ENCODE measurements at regions of chr16 and their contacts with region 1.

Region 1: GRCh38 chr16:30429678-30430427 is at the start of gene DCTPP1:
- DNase-seq: peak; percentile 97
- ATAC-seq: peak; percentile 96
- H3K4me3 Mint-ChIP-seq: no peak within 1 kb of the TSS
- H3K27ac Mint-ChIP-seq: no peak within 1 kb of the TSS
- H3K4me1 Mint-ChIP-seq: peaks cover 31% of the 10 kb centered on the region
- H3K27me3 Mint-ChIP-seq: no peaks in the 10 kb centered on the region
- total RNA-seq, gene DCTPP1: 89.3 to 102 TPM

Region 2: DNA sequence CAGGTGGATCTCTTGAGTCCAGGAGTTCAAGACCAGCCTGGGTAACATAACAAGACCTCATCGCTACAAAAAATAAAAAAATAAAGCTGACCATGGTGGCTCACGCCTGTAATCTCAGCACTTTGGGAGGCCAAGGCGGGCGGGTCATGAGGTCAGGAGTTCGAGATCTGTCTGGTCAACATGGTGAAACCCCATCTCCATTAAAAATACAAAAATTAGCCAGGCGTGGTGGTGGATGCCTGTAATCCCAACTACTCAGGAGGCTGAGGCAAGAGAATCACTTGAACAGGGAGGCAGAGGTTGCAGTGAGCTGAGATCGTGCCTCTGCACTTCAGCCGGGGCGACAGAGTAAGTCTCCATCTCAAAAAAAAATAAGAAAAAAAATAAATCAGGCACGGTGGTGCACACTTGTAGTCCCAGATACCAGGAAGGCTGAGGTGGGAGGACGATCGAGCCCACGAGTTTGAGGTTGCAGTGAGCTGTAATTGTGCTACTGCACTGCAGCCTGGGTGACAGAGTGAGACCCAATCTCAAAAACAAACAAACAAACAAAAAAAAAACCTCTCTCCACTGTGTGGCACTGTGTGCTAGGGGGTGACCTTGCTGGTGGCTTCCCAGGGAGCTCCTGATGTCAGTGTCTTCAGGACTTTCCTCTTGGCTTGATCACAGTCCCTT is 287.0 kb before region 1 on chr16:
- CTCF ChIA-PET with region 1: no interaction called
- POLR2A ChIA-PET with region 1: no interaction called
- intact Hi-C with region 1: no loop called
- DNase-seq: peak; percentile 33
- ATAC-seq: peak; percentile 82
- H3K4me3 Mint-ChIP-seq: no peak overlapping the region
- H3K27ac Mint-ChIP-seq: peak overlapping the region; percentile 2
- H3K4me1 Mint-ChIP-seq: peaks cover 20% of the 10 kb centered on the region
- H3K27me3 Mint-ChIP-seq: no peaks in the 10 kb centered on the region

Region 3: GRCh38 chr16:30417529-30418349 is 12.1 kb before region 1 on chr16:
- CTCF ChIA-PET with region 1: interaction called, 56 read pairs
- POLR2A ChIA-PET with region 1: interaction called, 14 read pairs
- intact Hi-C with region 1: no loop called
- DNase-seq: peak; percentile 94
- ATAC-seq: peak; percentile 92
- H3K4me3 Mint-ChIP-seq: peak overlapping the region; percentile 49
- H3K27ac Mint-ChIP-seq: no peak overlapping the region
- H3K4me1 Mint-ChIP-seq: peaks cover 31% of the 10 kb centered on the region
- H3K27me3 Mint-ChIP-seq: no peaks in the 10 kb centered on the region

Region 4: DNA sequence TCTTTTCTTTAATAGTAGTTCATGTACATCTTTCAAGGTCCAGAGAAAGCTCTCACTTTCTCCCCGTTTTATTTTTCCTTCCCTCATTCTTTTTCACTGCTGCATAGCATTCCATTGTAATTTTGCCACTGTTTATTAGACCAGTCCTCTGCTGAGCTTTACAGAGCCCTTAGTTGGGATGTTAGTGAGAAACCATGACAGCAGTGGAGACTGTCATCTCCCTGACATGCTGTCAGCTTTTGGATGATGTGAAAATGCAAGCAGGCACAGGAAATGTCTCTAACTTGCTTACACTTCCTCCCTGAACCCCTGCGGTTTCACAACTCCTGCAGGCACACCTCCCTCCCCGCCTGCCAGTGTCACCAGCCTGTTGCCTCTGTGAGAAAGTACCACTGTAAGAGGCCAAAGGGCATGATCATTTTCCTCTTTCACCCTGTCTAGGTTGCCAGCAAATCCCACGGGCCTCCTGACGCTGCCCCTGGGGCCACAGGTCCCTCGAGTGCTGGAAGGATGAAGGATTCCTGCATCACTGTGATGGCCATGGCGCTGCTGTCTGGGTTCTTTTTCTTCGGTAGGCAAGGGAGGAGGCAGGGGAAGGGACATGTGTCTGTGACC is 42.6 kb after region 1 on chr16 and contains the start of gene ITGAL:
- CTCF ChIA-PET with region 1: interaction called, 36 read pairs
- POLR2A ChIA-PET with region 1: interaction called, 16 read pairs
- intact Hi-C with region 1: loop called (anchors 1 kb)
- DNase-seq: peak; percentile 93
- ATAC-seq: peak; percentile 62
- H3K4me3 Mint-ChIP-seq: peak within 1 kb of the TSS; percentile 95
- H3K27ac Mint-ChIP-seq: peak within 1 kb of the TSS; percentile 99
- H3K4me1 Mint-ChIP-seq: peaks cover 63% of the 10 kb centered on the region
- H3K27me3 Mint-ChIP-seq: no peaks in the 10 kb centered on the region
- total RNA-seq, gene ITGAL: 210 to 222 TPM

Region 5: GRCh38 chr16:30534368-30535105 is 104.7 kb after region 1 on chr16 and contains the start of gene ZNF747:
- CTCF ChIA-PET with region 1: interaction called, 30 read pairs
- POLR2A ChIA-PET with region 1: interaction called, 5 read pairs
- intact Hi-C with region 1: loop called (anchors 1 to 2 kb)
- DNase-seq: peak; percentile 95
- ATAC-seq: peak; percentile 80
- H3K4me3 Mint-ChIP-seq: peak within 1 kb of the TSS; percentile 91
- H3K27ac Mint-ChIP-seq: peak within 1 kb of the TSS; percentile 100
- H3K4me1 Mint-ChIP-seq: peaks cover 44% of the 10 kb centered on the region
- H3K27me3 Mint-ChIP-seq: no peaks in the 10 kb centered on the region
- total RNA-seq, gene ZNF747: 6.3 to 8.0 TPM

Region 6: DNA sequence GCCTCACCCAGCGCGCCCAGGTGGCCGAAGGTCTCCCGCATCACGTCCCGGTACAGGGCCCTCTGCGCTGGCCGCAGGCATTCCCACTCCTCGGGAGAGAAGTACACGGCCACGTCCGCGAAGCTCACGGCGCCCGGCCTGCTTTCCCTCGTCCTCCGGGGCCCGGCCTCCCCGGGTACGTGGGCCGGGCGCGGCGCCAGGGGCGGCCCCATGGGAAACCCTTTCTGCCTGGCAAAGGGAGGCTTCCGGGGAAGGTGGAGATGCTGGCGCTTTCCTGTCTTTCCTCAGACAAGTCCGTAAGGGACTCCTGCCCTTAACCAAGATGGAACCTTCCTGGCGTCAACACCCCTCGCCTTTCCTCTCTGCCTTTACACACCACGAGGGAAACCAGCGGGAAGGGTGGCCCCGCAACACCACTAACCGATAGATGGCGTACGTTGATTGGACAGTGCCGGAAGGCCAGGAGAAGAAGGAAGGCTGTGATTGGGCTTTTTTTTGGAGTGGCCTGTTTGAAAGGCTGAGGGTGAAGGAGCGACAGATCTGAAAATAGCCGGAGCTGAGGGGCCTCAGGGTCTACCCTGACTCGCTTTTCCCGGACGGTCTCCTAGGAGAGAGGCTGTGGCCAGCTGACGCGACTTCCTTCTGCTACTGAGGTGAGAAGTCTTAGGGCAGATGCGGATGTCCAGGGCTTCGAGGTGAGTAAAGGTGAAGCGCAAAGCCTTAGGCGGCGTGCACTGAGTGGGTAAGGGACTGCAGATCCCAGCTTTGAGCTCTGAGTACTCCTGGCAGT is 155.7 kb after region 1 on chr16 and contains the start of gene ZNF785:
- CTCF ChIA-PET with region 1: interaction called, 4 read pairs
- POLR2A ChIA-PET with region 1: no interaction called
- intact Hi-C with region 1: loop called in 1 of 2 experiments (anchors 1 kb)
- DNase-seq: peak; percentile 96
- ATAC-seq: peak; percentile 99
- H3K4me3 Mint-ChIP-seq: peak within 1 kb of the TSS; percentile 87
- H3K27ac Mint-ChIP-seq: peak within 1 kb of the TSS; percentile 92
- H3K4me1 Mint-ChIP-seq: peaks cover 37% of the 10 kb centered on the region
- H3K27me3 Mint-ChIP-seq: no peaks in the 10 kb centered on the region
- total RNA-seq, gene ZNF785: 9.2 to 10.8 TPM

Region 7: DNA sequence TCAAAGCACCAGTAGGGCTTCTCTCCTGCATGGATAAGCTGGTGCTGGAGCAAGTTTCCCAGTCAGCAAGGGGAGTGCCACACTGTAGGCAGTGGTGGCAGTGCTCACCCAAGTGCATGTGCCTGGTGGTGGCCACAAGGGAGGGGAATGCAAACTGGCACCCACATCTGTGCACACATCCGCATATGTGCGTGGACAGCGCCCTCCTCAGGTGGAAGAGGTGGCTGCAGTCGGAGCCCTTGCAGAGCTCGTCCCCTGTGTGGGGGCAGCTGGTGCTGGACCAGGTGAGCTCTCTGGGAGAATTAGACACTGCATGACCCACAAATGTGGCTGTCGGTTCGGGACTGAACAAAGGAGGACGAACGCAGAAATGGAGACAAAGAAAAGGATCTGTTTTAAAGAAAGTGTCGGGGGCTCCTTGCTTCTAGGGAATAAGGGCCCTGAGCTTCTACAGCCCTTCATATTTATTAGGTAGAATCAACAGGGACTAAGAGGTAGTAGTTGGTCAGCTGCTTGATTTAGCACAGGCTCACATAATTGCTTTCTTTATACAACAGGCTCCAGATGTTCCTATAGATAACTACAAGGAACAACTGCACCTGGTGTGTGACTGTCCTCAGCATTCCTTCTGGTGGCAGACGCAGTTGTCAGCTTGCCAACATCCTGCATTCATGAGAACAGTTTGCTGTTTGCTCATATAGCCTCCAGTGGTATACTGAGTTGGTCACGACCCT is 185.7 kb after region 1 on chr16:
- CTCF ChIA-PET with region 1: interaction called, 27 read pairs
- POLR2A ChIA-PET with region 1: interaction called, 4 read pairs
- intact Hi-C with region 1: loop called (anchors 1 to 5 kb)
- DNase-seq: peak; percentile 94
- ATAC-seq: peak; percentile 89
- H3K4me3 Mint-ChIP-seq: no peak overlapping the region
- H3K27ac Mint-ChIP-seq: no peak overlapping the region
- H3K4me1 Mint-ChIP-seq: peaks cover 4% of the 10 kb centered on the region
- H3K27me3 Mint-ChIP-seq: no peaks in the 10 kb centered on the region

Region 8: GRCh38 chr16:31072540-31073141 is 642.8 kb after region 1 on chr16:
- CTCF ChIA-PET with region 1: no interaction called
- POLR2A ChIA-PET with region 1: no interaction called
- intact Hi-C with region 1: no loop called
- DNase-seq: peak; percentile 62
- ATAC-seq: peak; percentile 1
- H3K4me3 Mint-ChIP-seq: peak overlapping the region; percentile 97
- H3K27ac Mint-ChIP-seq: peak overlapping the region; percentile 90
- H3K4me1 Mint-ChIP-seq: peaks cover 34% of the 10 kb centered on the region
- H3K27me3 Mint-ChIP-seq: no peaks in the 10 kb centered on the region